Activated T-helper 1 cell treated with anti-CD3 and anti-CD28 coated beads, Interleukin-12 subunit alpha, Interleukin-12 subunit beta, Interleukin-2, Interleukin-4 antibody, amounts not matched to agents 30 ng/mL and 10 ng/mL and 1 ng/mL, durations not matched to agents 14 hours and 24 hours and 36 hours (primary cell): ENCODE measurements at regions of chr2 and their contacts with region 1.

Region 1: DNA sequence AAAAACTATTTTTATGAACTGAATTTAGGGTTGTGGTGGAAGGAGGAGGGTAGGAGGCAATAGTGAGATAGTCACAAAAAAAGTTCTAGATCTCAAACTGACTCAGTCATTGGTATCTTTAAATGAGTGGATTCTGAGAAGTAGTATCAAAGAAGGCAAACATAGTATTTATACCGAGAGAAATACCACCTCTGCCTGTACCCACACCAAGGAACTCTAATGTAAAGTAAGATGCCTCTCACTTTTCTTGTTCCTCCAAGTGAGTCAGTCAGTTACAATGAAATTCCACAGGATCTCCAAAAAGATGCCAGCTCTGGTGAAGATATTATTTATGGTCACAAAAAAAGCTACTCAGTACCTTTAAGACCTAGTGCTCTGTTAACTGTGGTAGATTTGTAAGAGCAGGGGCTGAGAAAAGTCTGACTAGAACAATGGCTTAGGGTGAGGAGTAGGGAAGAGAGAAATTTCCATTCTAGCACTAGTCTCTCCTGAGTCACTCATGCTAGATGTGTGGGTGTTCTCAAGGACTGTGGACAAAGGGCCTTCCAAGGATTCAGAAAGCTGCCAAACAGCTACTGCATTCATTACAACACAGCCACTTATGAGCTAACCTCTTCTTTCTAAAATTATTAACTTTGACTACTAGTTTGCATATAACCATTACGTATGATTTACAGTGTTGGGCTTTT is 36.3 kb downstream of the YWHAQ start:
- DNase-seq: no peak
- H3K4me3 Mint-ChIP-seq: peak overlapping the region; percentile 28
- H3K27ac Mint-ChIP-seq: peak overlapping the region; percentile 85
- H3K4me1 Mint-ChIP-seq: peaks cover 71% of the 10 kb centered on the region
- H3K27me3 Mint-ChIP-seq: no peaks in the 10 kb centered on the region

Region 2: GRCh38 chr2:9558948-9559381 is 35.5 kb before region 1 on chr2:
- intact Hi-C with region 1: no loop called
- DNase-seq: no peak
- H3K4me3 Mint-ChIP-seq: no peak overlapping the region
- H3K27ac Mint-ChIP-seq: no peak overlapping the region
- H3K4me1 Mint-ChIP-seq: peaks cover 35% of the 10 kb centered on the region
- H3K27me3 Mint-ChIP-seq: no peaks in the 10 kb centered on the region

Region 3: DNA sequence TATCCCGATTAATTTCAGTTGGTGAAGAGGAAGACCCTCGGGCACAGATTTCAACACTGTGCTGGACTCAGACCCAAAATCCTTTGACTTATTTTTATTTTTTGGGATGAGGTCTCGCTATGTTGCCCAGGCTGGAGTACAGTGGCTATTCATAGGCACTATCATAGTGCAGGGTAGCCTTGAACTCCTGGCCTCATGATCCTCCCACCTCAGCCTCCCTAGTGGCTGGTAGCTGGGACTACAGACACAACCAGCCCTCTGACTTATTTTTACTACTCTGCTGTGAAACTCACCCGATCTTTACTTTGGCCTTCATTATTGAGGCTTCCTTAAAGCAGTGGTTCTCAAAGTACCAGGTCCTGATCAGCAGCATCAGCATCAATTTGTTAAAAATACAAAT is 20.7 kb before region 1 on chr2:
- intact Hi-C with region 1: loop called (anchors 2 kb)
- DNase-seq: no peak
- H3K4me3 Mint-ChIP-seq: no peak overlapping the region
- H3K27ac Mint-ChIP-seq: no peak overlapping the region
- H3K4me1 Mint-ChIP-seq: peaks cover 20% of the 10 kb centered on the region
- H3K27me3 Mint-ChIP-seq: no peaks in the 10 kb centered on the region

Region 4: DNA sequence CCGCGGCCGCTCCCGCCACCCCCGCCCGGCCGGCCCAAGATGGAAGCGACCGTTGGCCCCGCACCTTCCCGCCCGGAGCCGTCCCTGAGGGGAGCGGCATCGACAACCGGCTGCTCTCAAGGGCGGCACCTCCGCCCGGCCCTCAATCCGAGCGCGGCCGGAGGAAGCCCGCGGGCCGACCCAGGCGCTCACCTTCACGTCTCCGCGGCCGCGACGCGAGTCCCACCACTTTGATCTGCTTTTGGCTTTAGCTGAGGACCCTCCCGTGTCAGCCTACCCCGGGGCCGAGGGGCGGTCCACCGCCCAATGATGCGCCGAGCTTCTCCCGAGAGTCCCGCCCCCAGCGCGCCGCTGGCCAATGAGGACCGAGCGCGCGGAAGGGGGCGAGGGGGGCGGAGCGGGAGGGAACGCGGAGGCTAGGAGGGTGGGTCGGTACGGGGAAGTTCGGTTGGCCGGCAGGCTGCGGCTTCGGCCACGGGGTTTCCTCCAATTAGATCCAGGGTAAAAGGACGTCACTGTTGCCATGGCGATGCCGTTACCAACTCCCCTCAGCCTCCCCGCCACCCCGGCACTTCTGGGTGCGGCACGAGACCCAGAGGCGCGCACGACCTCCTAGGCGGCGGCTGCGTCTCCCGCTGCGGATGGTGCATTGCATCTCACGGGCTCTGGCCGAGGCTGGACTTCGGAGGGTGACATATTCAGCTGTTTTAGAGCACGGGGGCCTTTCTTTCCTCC is 36.4 kb after region 1 on chr2 and contains the start of gene YWHAQ:
- intact Hi-C with region 1: loop called (anchors 1 kb)
- DNase-seq: peak; percentile 97
- H3K4me3 Mint-ChIP-seq: peak within 1 kb of the TSS; percentile 97
- H3K27ac Mint-ChIP-seq: peak within 1 kb of the TSS; percentile 93
- H3K4me1 Mint-ChIP-seq: peaks cover 45% of the 10 kb centered on the region
- H3K27me3 Mint-ChIP-seq: peaks cover 9% of the 10 kb centered on the region
- total RNA-seq, gene YWHAQ: 290 and 311 TPM in 2 replicates

Region 5: DNA sequence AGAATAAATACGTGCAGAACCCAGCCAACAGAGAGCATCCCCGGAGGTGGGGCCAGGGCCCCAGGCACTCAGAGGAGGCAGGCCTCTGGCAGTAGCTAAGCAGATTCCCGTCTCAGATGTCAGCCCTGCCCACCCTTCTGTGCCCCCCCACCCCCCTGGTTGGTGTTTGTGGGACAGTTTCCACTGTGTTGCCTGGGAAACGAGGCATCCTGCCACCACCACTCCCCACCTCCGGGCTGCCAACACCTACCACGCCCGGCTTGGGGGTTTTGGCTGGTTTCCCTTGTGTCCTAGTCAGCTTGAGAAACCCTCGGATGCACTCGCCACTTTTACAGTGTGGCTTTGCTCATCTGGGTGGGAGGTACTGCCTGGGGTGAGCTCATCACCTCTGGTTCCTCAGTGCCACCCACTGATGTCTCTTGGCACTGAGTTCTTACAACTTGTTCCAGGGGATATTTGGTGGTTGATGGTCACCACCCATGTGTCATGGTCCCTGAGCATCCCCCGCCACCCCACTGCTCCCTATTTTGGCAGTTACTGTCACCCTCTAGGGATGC is 108.7 kb after region 1 on chr2:
- intact Hi-C with region 1: loop called (anchors 1 kb)
- DNase-seq: peak; percentile 79
- H3K4me3 Mint-ChIP-seq: no peak overlapping the region
- H3K27ac Mint-ChIP-seq: peak overlapping the region; percentile 74
- H3K4me1 Mint-ChIP-seq: peaks cover 48% of the 10 kb centered on the region
- H3K27me3 Mint-ChIP-seq: no peaks in the 10 kb centered on the region

Region 6: DNA sequence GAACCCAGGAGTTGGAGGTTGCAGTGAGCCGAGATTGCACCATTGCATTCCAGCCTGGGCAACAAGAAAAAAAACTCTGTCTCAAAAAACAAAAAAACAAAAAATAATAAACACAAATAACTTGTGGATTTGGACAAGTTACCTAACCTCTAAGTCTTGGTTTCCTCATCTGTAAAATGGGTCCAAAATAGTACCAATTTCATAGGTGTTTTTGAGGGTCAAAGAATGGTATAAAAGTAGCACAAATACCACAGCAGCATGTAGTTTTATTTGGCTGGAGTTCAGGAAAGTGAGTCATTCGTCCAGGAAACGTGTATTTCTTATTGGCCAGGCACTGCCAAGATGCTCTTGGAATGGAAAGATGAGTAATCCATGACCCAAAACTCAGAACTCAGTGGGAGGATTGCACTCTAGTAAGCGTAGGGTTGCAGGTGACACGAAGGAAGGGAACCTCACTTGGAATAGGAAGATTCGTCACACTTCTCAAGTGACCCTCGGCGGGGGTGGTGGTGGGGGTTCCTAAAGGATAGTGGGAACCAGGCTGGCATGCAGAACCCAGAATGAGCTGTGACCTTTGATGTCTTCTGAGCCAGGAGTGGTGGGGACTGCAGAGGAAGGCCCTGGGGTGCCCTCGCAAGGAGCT is 381.4 kb after region 1 on chr2:
- intact Hi-C with region 1: loop called (anchors 5 kb)
- DNase-seq: no peak
- H3K4me3 Mint-ChIP-seq: no peak overlapping the region
- H3K27ac Mint-ChIP-seq: peak overlapping the region; percentile 4
- H3K4me1 Mint-ChIP-seq: peaks cover 72% of the 10 kb centered on the region
- H3K27me3 Mint-ChIP-seq: peaks cover 4% of the 10 kb centered on the region

Region 7: GRCh38 chr2:10204326-10205161 is 610.0 kb after region 1 on chr2:
- intact Hi-C with region 1: no loop called
- DNase-seq: no peak
- H3K4me3 Mint-ChIP-seq: no peak overlapping the region
- H3K27ac Mint-ChIP-seq: no peak overlapping the region
- H3K4me1 Mint-ChIP-seq: no peaks in the 10 kb centered on the region
- H3K27me3 Mint-ChIP-seq: no peaks in the 10 kb centered on the region